Common myeloid progenitor, CD34-positive (primary cell): ENCODE measurements at regions of chr14 and their contacts with region 1.

Region 1: GRCh38 chr14:76710056-76711010 is 50.9 kb upstream of the VASH1 start:
- DNase-seq: peak; percentile 46 to 68 (median 55)
- H3K4me3 ChIP-seq: no peak overlapping the region
- H3K27ac ChIP-seq: no peak overlapping the region
- H3K4me1 ChIP-seq: no peaks in the 10 kb centered on the region
- H3K27me3 ChIP-seq: no peaks in the 10 kb centered on the region

Region 2: DNA sequence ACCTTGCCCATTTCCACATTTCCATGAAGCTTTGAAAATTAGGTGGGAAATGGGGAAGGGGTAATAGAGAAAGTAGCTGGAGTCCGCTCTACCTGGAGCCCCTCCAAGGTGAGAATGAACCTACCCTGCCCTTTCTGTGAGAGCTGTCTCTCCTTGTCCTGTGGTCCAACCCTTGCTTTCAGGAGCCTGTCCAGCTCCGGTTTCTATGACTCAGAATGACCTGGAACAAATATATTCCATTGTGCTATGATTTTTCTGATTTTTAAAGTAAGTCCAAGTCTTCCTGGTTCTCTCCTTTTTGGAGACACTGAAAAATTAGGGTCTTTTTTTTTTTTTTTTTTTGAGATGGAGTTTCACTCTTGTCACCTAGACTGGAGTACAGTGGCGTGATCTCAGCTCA is 38.2 kb before region 1 on chr14:
- CTCF ChIA-PET with region 1: no interaction called
- POLR2A ChIA-PET with region 1: no interaction called
- DNase-seq: no peak
- H3K4me3 ChIP-seq: no peak overlapping the region
- H3K27ac ChIP-seq: no peak overlapping the region
- H3K4me1 ChIP-seq: no peaks in the 10 kb centered on the region
- H3K27me3 ChIP-seq: peaks cover 0 to 5% (median 2%) of the 10 kb centered on the region in 5 experiments

Region 3: GRCh38 chr14:76697246-76697905 is 13.0 kb before region 1 on chr14:
- CTCF ChIA-PET with region 1: interaction called, 12 read pairs
- POLR2A ChIA-PET with region 1: no interaction called
- DNase-seq: no peak
- H3K4me3 ChIP-seq: no peak overlapping the region
- H3K27ac ChIP-seq: no peak overlapping the region
- H3K4me1 ChIP-seq: peaks cover 0 to 3% (median 0%) of the 10 kb centered on the region in 4 experiments
- H3K27me3 ChIP-seq: no peaks in the 10 kb centered on the region

Region 4: GRCh38 chr14:76720382-76720813 is 10.1 kb after region 1 on chr14:
- CTCF ChIA-PET with region 1: interaction called, 10 read pairs
- POLR2A ChIA-PET with region 1: no interaction called
- DNase-seq: no peak
- H3K4me3 ChIP-seq: no peak overlapping the region
- H3K27ac ChIP-seq: no peak overlapping the region
- H3K4me1 ChIP-seq: peaks cover 0 to 10% (median 2%) of the 10 kb centered on the region in 4 experiments
- H3K27me3 ChIP-seq: peaks cover 0 to 2% (median 0%) of the 10 kb centered on the region in 5 experiments

Region 5: DNA sequence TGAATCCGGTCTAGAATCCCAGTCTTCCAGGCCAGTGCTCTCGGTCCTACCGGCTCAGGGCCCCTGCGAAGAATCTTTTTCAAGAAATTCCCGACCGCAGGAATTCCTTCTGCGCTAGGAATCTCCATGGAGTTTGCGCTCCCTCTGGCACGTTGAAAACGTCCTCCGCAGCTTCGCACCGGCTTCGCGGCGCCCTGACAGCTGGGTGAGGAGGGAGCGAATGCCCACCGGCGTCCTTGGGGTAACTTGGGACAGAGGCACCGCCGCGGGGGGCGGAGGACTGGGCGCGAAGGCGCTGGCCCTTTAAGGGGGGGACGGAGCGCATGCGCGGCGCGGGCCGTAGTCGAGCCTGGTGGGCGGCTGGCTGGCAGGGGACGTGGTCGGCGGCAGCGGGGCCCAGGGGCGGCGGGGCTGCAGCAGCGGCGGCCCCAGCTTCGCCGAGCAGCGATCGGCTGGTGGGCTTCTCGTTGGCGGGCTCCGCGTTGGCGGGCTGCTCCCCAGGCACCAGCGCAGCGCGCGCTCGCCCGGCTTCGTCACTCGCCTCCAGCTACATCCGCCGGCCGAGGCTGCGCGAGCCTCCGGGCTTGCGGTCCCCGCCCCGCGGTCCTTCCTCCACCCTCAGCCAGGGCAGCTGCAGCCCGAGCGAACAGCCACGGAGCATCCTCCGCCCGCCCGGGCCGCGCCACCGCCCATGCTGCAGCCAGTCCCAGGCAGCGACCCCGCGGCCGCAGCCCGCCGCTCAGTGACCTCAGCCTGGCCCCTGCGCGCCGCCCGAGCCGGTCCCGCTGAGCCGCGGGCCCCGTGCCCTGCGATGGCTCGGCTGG is 51.0 kb after region 1 on chr14 and contains the start of gene VASH1:
- CTCF ChIA-PET with region 1: interaction called, 125 read pairs
- POLR2A ChIA-PET with region 1: interaction called, 4 read pairs
- DNase-seq: peak; percentile 50 to 81 (median 73)
- H3K4me3 ChIP-seq: peak within 1 kb of the TSS; percentile 45 to 82 (median 61)
- H3K27ac ChIP-seq: no peak within 1 kb of the TSS
- H3K4me1 ChIP-seq: peaks cover 0 to 25% (median 19%) of the 10 kb centered on the region in 4 experiments
- H3K27me3 ChIP-seq: peaks cover 0 to 24% (median 8%) of the 10 kb centered on the region in 5 experiments

Region 6: GRCh38 chr14:76767681-76768656 is 57.6 kb after region 1 on chr14:
- CTCF ChIA-PET with region 1: interaction called, 125 read pairs
- POLR2A ChIA-PET with region 1: interaction called, 3 read pairs
- DNase-seq: peak; percentile 96 to 100 (median 99)
- H3K4me3 ChIP-seq: peak overlapping the region in 3 of 7 experiments; percentile 26 to 46 (median 43)
- H3K27ac ChIP-seq: peak overlapping the region; percentile 50 to 78
- H3K4me1 ChIP-seq: peaks cover under 1 to 54% (median 50%) of the 10 kb centered on the region in 4 experiments
- H3K27me3 ChIP-seq: peaks cover 0 to 3% (median under 1%) of the 10 kb centered on the region in 5 experiments

Region 7: GRCh38 chr14:76806446-76806845 is 96.1 kb after region 1 on chr14:
- CTCF ChIA-PET with region 1: interaction called, 17 read pairs
- POLR2A ChIA-PET with region 1: no interaction called
- DNase-seq: no peak
- H3K4me3 ChIP-seq: no peak overlapping the region
- H3K27ac ChIP-seq: no peak overlapping the region
- H3K4me1 ChIP-seq: peaks cover 7 to 25% (median 10%) of the 10 kb centered on the region in 4 experiments
- H3K27me3 ChIP-seq: no peaks in the 10 kb centered on the region

Region 8: GRCh38 chr14:76812211-76813044 is 102.1 kb after region 1 on chr14 and contains the start of gene ANGEL1:
- CTCF ChIA-PET with region 1: interaction called, 17 read pairs
- POLR2A ChIA-PET with region 1: no interaction called
- DNase-seq: peak; percentile 94 to 96 (median 96)
- H3K4me3 ChIP-seq: peak within 1 kb of the TSS; percentile 71 to 85 (median 74)
- H3K27ac ChIP-seq: peak within 1 kb of the TSS; percentile 3 to 37
- H3K4me1 ChIP-seq: peaks cover 9 to 26% (median 24%) of the 10 kb centered on the region in 4 experiments
- H3K27me3 ChIP-seq: peaks cover 0 to 2% (median 0%) of the 10 kb centered on the region in 5 experiments